Mammary epithelial cell (primary cell): ENCODE measurements at regions of chr12 and their contacts with region 1.

Region 1: GRCh38 chr12:53508534-53509199 is 1.4 kb upstream of the NPFF start:
- DNase-seq: peak; percentile 61
- H3K4me3 ChIP-seq: no peak overlapping the region
- H3K27ac ChIP-seq: no peak overlapping the region
- H3K4me1 ChIP-seq: no peaks in the 10 kb centered on the region
- H3K27me3 ChIP-seq: no peaks in the 10 kb centered on the region
- CTCF ChIP-seq: peak; percentile 93 to 97

Region 2: GRCh38 chr12:53451661-53452158 is 57.0 kb before region 1 on chr12 and contains the start of gene PCBP2:
- CTCF ChIA-PET with region 1: no interaction called
- dilution Hi-C with region 1: no loop called
- in situ Hi-C with region 1: no loop called
- intact Hi-C with region 1: loop called (anchors 1 kb)
- DNase-seq: peak; percentile 99
- H3K4me3 ChIP-seq: peak within 1 kb of the TSS; percentile 68 to 99 (median 99)
- H3K27ac ChIP-seq: peak within 1 kb of the TSS; percentile 87
- H3K4me1 ChIP-seq: peaks cover 11% of the 10 kb centered on the region
- H3K27me3 ChIP-seq: no peaks in the 10 kb centered on the region
- CTCF ChIP-seq: peak; percentile 92 to 93
- total RNA-seq, gene PCBP2: 187 to 654 TPM